RWPE1 (cell line): ENCODE measurements at regions of chr7 and their contacts with region 1.

Region 1: DNA sequence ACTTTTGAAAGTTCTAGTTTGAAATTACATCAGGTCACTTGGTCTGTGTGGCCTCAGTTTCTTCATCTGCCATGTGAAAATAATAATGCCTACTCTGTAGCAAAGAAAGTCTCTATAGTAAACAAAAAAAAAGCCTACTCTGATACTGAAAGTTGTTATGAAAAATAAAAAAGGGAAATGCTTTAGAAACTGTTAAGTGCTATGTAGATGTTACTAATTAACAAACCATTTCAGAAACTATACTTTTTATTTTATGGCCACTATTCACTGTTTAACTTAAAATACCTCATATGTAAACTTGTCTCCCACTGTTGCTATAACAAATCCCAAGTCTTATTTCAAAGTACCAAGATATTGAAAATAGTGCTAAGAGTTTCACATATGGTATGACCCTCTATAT is 50.6 kb downstream of the CFTR start:
- DNase-seq: no peak
- H3K27ac ChIP-seq: no peak overlapping the region
- CTCF ChIP-seq: no peak

Region 2: DNA sequence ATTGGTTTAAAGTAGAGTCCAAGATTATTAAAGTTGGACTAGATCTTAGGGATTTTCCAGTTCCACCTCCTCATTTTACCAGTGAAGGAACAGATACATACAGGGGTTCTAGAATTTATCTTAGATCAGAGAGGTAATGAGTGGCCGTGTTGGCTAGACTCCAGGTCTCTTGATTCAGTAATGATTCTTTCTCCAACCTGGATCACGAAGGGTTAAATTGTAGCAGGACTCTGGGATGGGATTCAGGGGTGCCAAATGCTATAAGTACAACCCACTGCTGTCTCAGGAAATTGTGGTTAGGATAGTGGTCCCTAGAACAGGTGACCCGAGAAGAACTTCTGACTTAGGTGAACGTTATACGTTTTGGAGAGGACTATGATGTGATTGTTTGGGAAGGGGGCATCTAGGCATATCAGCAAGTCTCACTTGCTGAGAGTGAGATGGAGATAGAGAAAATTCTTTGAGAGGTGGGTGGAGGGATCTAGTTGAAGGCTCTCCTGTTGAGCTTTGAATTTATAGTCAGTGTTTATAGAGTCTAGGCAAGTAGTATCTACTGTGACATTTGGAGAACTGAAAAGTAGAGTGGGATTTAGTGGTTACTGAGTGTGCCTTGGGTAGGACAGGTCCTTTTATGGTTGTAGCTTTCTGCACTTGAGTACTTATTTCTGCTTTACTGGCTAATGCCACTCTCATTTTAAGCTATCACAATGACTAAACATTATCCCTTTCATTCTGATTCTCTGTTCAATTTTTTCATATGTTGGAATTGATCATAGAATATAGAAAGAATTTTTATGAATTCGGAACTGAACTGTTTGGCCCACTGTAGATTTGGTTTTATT is 518.8 kb before region 1 on chr7:
- CTCF ChIA-PET with region 1: interaction called, 10 read pairs
- POLR2A ChIA-PET with region 1: no interaction called
- DNase-seq: no peak
- H3K27ac ChIP-seq: no peak overlapping the region
- CTCF ChIP-seq: no peak